ENCODE measurements at regions of chr16 and their contacts with region 1.

Region 1: DNA sequence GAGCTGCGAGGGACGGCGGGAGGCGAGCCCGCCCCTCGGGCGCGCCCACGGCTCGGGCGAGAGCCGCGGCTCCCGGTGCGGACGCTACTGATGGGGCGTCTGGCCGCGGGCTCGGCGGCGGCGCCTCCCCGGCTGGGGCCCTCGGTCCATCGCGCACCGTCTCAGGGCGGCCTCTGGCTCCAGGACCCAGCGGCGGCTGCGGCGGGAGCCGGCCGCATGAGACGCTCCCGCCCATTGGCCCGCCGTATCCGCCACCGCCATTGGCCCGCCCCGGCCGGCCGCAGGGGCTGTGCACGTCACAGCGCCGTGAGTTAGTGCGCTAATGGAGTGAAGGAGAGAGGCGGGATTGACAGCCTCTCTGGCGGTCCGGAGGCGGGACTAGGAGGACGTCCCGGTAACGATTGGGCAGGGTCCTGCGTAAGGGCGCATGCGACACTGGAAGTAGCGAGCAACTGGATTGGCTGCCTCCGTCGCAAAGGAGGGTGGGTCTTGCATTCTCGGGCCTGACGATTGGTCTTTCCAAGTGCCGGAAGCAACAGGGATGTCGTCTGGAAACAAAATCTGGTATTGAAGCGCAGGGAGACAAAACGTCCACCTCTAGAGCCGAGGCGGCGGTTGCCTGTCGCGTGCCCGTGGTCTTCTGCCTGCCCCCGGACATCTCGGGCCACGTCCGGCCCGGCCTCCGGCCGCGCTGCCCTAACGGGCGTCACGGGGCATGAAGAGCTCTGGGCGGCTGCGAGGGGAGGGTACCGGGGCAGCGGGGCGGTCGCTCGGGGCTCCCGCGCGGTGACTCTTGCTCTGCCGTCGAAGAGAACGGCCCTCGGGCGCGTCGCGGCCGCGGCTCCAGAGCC is at the start of gene ANKRD11:
- DNase-seq: peak; percentile 100
- ATAC-seq: peak; percentile 96
- H3K4me3 ChIP-seq: peak within 1 kb of the TSS; percentile 59 to 74
- H3K27ac ChIP-seq: peak within 1 kb of the TSS; percentile 95
- H3K4me1 ChIP-seq: peaks cover 17 to 44% of the 10 kb centered on the region in 2 experiments
- H3K27me3 ChIP-seq: no peaks in the 10 kb centered on the region
- CTCF ChIP-seq: no peak
- POLR2A ChIP-seq: peak; percentile 49
- RAD21 ChIP-seq: no peak
- total RNA-seq, gene ANKRD11: 266 TPM

Region 2: DNA sequence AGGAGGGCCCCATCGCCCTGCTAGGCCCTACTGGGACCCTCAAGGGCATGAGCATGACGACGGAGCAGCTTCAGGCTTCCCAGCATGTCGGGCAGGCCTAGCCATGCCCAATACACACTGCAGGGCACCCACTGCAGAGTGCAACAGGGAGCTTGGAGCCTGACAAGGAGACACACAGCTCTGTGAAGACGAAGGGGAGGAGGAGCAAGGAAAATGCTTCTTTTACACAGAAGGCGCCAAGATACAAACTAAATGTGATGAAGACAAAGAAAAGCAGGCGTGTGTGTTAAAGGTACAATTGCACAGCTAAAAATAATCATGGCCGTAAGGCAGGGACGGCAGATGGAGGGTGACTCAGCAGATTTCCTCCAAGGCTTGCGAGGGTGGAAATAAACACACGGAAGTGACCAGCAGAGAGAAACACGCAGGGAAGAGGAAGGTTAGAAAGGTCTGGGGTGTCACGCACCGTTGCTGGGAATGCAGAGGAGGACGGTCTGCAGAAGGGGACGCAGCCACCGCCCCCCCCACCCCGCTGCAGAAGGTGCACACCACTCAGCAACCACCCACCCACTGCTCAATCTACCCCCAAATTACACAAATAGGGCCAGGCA is 164.6 kb before region 1 on chr16:
- CTCF ChIA-PET with region 1: no interaction called
- POLR2A ChIA-PET with region 1: no interaction called
- RAD21 ChIA-PET with region 1: interaction called in 1 of 2 experiments, 3 read pairs
- intact Hi-C with region 1: loop called (anchors 5 kb)
- DNase-seq: no peak
- ATAC-seq: no peak
- H3K4me3 ChIP-seq: peak overlapping the region; percentile 5 to 31; a peak in 2 of 4 replicates
- H3K27ac ChIP-seq: peak overlapping the region; percentile 80
- H3K4me1 ChIP-seq: peaks cover 96 to 100% of the 10 kb centered on the region in 2 experiments
- H3K27me3 ChIP-seq: no peaks in the 10 kb centered on the region
- CTCF ChIP-seq: no peak
- POLR2A ChIP-seq: no peak
- RAD21 ChIP-seq: no peak